Naive thymus-derived CD4-positive, alpha-beta T cell (primary cell): ENCODE measurements at regions of chr4 and their contacts with region 1.

Region 1: DNA sequence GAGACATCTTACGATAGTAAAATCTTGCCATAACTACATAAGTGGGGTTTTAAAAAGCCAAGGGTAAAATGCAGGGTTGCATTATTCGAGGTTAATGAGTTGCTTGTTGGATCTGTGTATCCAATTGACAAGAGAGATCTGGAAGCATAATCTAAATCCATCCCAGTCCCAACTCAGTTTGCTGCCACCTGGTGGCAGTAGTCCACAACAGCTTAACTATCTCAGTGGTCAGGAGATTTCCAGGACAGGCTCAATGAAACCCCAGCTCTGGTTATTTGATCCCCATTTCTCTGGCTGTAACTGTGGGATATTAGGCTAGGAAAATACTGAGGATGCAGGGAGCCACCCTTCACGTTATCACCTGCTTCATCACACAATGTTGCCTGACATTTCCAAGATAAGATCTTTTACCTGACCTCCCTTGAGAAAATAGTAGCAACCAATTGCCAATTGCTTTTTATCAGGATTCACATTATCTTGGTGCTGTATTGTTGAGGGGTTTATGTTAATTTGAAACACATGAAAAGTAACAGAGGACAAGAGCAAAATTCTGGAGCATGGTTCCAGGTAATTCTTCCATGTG is 88.2 kb upstream of the TNIP3 start:
- DNase-seq: peak in 8 of 9 donors; percentile 26 to 49 (median 44)
- ATAC-seq: peak; percentile 45
- H3K4me3 ChIP-seq: no peak overlapping the region
- H3K4me3 Mint-ChIP-seq: no peak overlapping the region
- H3K27ac ChIP-seq: no peak overlapping the region
- H3K27ac Mint-ChIP-seq: peak overlapping the region in 2 of 9 donors; percentile 6 to 58
- H3K4me1 ChIP-seq: peaks cover 14 to 49% of the 10 kb centered on the region in 2 donors
- H3K4me1 Mint-ChIP-seq: peaks cover 12 to 65% (median 61%) of the 10 kb centered on the region in 7 donors
- H3K27me3 ChIP-seq: no peaks in the 10 kb centered on the region
- H3K27me3 Mint-ChIP-seq: no peaks in the 10 kb centered on the region

Region 2: DNA sequence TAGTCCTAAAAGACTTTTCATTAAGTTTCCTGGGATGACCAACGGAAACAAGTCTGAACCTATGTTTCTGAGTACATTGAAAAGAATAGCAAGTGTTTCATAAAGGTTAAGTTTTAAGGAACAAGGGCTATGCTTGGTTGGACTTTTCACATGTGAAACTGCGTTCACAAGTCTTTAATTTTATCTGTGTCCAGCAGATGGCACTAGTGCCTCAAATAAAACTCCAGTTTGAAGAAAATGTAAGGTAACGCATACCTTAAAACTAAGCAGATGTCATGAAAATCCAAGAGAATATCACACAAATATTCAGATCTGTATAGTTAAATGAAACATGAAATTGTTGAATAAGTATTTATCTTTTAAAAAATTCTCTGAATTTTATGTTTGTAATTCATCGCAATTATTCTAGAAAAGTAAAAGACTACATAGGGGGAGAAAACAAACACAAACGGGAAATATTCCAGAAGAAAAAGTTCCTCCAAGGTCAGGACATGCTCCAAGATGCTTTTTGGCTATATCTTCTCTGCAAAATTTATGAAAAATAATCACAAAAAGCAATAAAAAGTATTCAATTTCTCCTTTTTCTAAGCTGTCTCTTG is 1096.1 kb before region 1 on chr4:
- CTCF ChIA-PET with region 1: interaction called, 3 read pairs
- POLR2A ChIA-PET with region 1: no interaction called
- intact Hi-C with region 1: loop called in 1 of 2 experiments (anchors 1 kb)
- DNase-seq: peak in 7 of 9 donors; percentile 22 to 63 (median 57)
- ATAC-seq: peak; percentile 63
- H3K4me3 ChIP-seq: no peak overlapping the region
- H3K4me3 Mint-ChIP-seq: no peak overlapping the region
- H3K27ac ChIP-seq: no peak overlapping the region
- H3K27ac Mint-ChIP-seq: no peak overlapping the region
- H3K4me1 ChIP-seq: no peaks in the 10 kb centered on the region
- H3K4me1 Mint-ChIP-seq: no peaks in the 10 kb centered on the region
- H3K27me3 ChIP-seq: no peaks in the 10 kb centered on the region
- H3K27me3 Mint-ChIP-seq: peaks cover 0 to 4% (median 0%) of the 10 kb centered on the region in 5 donors

Region 3: GRCh38 chr4:121016630-121017029 is 235.7 kb before region 1 on chr4:
- CTCF ChIA-PET with region 1: no interaction called
- POLR2A ChIA-PET with region 1: no interaction called
- intact Hi-C with region 1: no loop called
- DNase-seq: no peak
- ATAC-seq: no peak
- H3K4me3 ChIP-seq: no peak overlapping the region
- H3K4me3 Mint-ChIP-seq: no peak overlapping the region
- H3K27ac ChIP-seq: no peak overlapping the region
- H3K27ac Mint-ChIP-seq: peak overlapping the region in 1 of 9 donors; percentile 55
- H3K4me1 ChIP-seq: peaks cover 0 to 4% of the 10 kb centered on the region in 2 donors
- H3K4me1 Mint-ChIP-seq: peaks cover 0 to 41% (median 36%) of the 10 kb centered on the region in 7 donors
- H3K27me3 ChIP-seq: no peaks in the 10 kb centered on the region
- H3K27me3 Mint-ChIP-seq: peaks cover 0 to 7% (median 0%) of the 10 kb centered on the region in 5 donors

Region 4: DNA sequence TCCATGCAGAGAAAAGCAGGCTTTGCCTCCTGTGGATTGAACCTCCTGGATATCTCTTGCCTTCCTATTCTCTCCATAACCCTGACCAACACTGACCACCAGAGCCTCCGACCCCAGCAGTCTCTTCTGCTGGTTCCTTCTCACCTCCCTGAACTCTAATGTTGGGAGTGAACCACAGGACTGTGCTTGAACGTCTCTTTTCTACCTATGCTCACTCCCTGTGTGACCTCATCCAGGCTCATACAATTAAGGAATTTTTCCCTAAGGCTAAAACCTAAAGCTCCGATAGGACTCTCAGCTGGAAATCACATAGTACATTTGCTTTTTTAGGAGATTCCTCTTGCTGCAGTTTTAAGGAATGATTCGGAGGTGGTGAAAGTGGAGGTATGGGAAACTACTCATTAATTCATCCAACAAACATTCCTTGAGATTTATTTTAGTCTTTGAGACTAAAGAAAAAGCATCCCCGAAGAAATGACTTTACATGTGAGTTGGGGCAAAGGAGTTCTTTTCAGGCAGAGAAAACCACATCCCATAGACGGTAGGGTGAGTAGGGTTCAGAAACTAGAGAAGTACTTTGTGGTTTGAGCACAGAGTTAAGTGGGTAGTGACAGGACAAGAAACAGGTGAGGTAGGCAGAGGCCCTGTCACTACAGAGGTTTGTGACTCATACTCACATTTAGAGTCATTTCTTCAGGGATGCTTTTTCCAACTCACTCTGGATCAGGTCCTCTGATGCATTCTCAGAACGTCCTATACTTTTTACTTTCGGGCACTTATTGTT is 210.8 kb before region 1 on chr4:
- CTCF ChIA-PET with region 1: no interaction called
- POLR2A ChIA-PET with region 1: no interaction called
- intact Hi-C with region 1: loop called in 1 of 2 experiments (anchors 5 kb)
- DNase-seq: peak in 8 of 9 donors; percentile 17 to 60 (median 50)
- ATAC-seq: peak; percentile 91
- H3K4me3 ChIP-seq: no peak overlapping the region
- H3K4me3 Mint-ChIP-seq: peak overlapping the region in 7 of 10 donors; percentile 4 to 59 (median 20)
- H3K27ac ChIP-seq: no peak overlapping the region
- H3K27ac Mint-ChIP-seq: peak overlapping the region in 6 of 9 donors; percentile 2 to 25 (median 18)
- H3K4me1 ChIP-seq: peaks cover 0 to 14% of the 10 kb centered on the region in 2 donors
- H3K4me1 Mint-ChIP-seq: peaks cover 8 to 18% (median 12%) of the 10 kb centered on the region in 7 donors
- H3K27me3 ChIP-seq: no peaks in the 10 kb centered on the region
- H3K27me3 Mint-ChIP-seq: peaks cover 0 to 53% (median 0%) of the 10 kb centered on the region in 5 donors

Region 5: GRCh38 chr4:121112530-121112929 is 139.8 kb before region 1 on chr4:
- CTCF ChIA-PET with region 1: interaction called, 3 read pairs
- POLR2A ChIA-PET with region 1: no interaction called
- intact Hi-C with region 1: loop called in 1 of 2 experiments (anchors 10 kb)
- DNase-seq: no peak
- ATAC-seq: no peak
- H3K4me3 ChIP-seq: no peak overlapping the region
- H3K4me3 Mint-ChIP-seq: no peak overlapping the region
- H3K27ac ChIP-seq: no peak overlapping the region
- H3K27ac Mint-ChIP-seq: no peak overlapping the region
- H3K4me1 ChIP-seq: peaks cover 0 to 3% of the 10 kb centered on the region in 2 donors
- H3K4me1 Mint-ChIP-seq: peaks cover 0 to 25% (median 20%) of the 10 kb centered on the region in 7 donors
- H3K27me3 ChIP-seq: no peaks in the 10 kb centered on the region
- H3K27me3 Mint-ChIP-seq: peaks cover 0 to 29% (median 0%) of the 10 kb centered on the region in 5 donors

Region 6: GRCh38 chr4:121217351-121217750 is 35.0 kb before region 1 on chr4:
- CTCF ChIA-PET with region 1: interaction called, 4 read pairs
- POLR2A ChIA-PET with region 1: no interaction called
- intact Hi-C with region 1: loop called in 1 of 2 experiments (anchors 5 kb)
- DNase-seq: no peak
- ATAC-seq: no peak
- H3K4me3 ChIP-seq: no peak overlapping the region
- H3K4me3 Mint-ChIP-seq: no peak overlapping the region
- H3K27ac ChIP-seq: no peak overlapping the region
- H3K27ac Mint-ChIP-seq: peak overlapping the region in 2 of 9 donors; percentile 41 to 69
- H3K4me1 ChIP-seq: peaks cover 12 to 42% of the 10 kb centered on the region in 2 donors
- H3K4me1 Mint-ChIP-seq: peaks cover 23 to 54% (median 37%) of the 10 kb centered on the region in 7 donors
- H3K27me3 ChIP-seq: no peaks in the 10 kb centered on the region
- H3K27me3 Mint-ChIP-seq: peaks cover 0 to 6% (median 0%) of the 10 kb centered on the region in 5 donors

Region 7: DNA sequence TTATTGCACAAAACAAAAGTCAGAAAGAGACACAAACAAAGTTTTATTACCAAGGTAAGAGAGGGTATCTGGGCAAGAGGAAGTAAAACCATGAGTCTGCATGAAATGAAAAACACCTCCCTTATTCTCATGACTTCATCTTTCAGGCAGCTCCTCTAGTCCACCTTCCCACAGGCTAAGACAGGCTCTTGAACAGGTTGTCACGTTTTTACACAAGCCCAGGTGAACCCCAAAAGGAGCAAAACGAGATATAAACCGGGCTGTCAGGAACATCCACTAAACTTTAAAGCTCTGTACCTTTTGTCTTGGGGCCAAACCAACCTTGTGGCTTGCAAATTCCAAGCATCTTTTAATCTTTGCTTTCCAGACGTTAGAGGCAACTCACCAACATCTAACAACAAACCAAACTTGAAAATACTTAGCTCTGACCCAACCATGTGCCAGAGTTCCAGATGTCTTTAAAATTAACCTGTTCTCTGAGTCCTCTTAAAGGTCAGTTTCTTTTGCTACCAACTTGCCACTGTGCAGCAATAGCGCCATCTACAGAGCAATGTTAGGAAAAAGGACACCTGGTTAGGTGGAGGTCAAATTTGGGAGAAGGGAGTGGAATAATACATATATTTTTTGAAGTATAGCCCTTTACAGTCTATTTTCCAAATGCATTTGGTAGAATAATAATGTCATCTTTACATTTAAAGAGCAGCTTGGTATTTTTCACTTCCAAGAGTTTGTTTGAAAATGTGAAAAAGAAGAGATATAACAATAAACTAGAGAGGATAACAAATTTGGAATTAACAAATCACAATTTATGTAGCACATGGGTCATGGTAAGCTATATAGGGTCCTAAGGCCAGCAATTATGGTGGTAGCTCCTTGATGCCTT is 55.4 kb after region 1 on chr4:
- CTCF ChIA-PET with region 1: interaction called, 3 read pairs
- POLR2A ChIA-PET with region 1: no interaction called
- intact Hi-C with region 1: loop called (anchors 1 to 5 kb)
- DNase-seq: peak in 7 of 9 donors; percentile 10 to 52 (median 33)
- ATAC-seq: peak; percentile 70
- H3K4me3 ChIP-seq: no peak overlapping the region
- H3K4me3 Mint-ChIP-seq: no peak overlapping the region
- H3K27ac ChIP-seq: no peak overlapping the region
- H3K27ac Mint-ChIP-seq: peak overlapping the region in 1 of 9 donors; percentile 39
- H3K4me1 ChIP-seq: peaks cover 0 to 9% of the 10 kb centered on the region in 2 donors
- H3K4me1 Mint-ChIP-seq: peaks cover 3 to 19% (median 15%) of the 10 kb centered on the region in 7 donors
- H3K27me3 ChIP-seq: no peaks in the 10 kb centered on the region
- H3K27me3 Mint-ChIP-seq: peaks cover 0 to 17% (median 0%) of the 10 kb centered on the region in 5 donors